HCT116 (cell line): ENCODE measurements at regions of chr10 and their contacts with region 1.

Region 1: GRCh38 chr10:4512671-4513240 is 313.3 kb upstream of the AKR1E2 start:
- DNase-seq: peak; percentile 36
- ATAC-seq: peak; percentile 83
- H3K4me3 ChIP-seq: no peak overlapping the region
- H3K27ac ChIP-seq: no peak overlapping the region
- H3K4me1 ChIP-seq: peaks cover 0 to 5% of the 10 kb centered on the region in 2 experiments; a peak in 1 of 4 replicates
- H3K27me3 ChIP-seq: no peaks in the 10 kb centered on the region
- CTCF ChIP-seq: peak; percentile 62 to 71 (median 63); a peak in 4 of 6 replicates
- POLR2A ChIP-seq: no peak
- RAD21 ChIP-seq: peak; percentile 87

Region 2: GRCh38 chr10:3197348-3198003 is 1315.3 kb before region 1 on chr10:
- CTCF ChIA-PET with region 1: no interaction called
- POLR2A ChIA-PET with region 1: no interaction called
- RAD21 ChIA-PET with region 1: interaction called in 1 of 2 experiments, 3 read pairs
- intact Hi-C with region 1: loop called (anchors 10 kb)
- DNase-seq: peak; percentile 74
- ATAC-seq: peak; percentile 97
- H3K4me3 ChIP-seq: peak overlapping the region; percentile 27 to 47
- H3K27ac ChIP-seq: no peak overlapping the region
- H3K4me1 ChIP-seq: peaks cover 7 to 14% of the 10 kb centered on the region in 2 experiments; a peak in 3 of 4 replicates
- H3K27me3 ChIP-seq: peaks cover 24% of the 10 kb centered on the region; the same call in 1 of the 2 replicates
- CTCF ChIP-seq: peak; percentile 78 to 96 (median 87)
- POLR2A ChIP-seq: no peak
- RAD21 ChIP-seq: peak; percentile 99